Gastrocnemius medialis (tissue), 4 donors: ENCODE measurements at regions of chr14 and their contacts with region 1.

Region 1: GRCh38 chr14:64117671-64118402 is 176.3 kb downstream of the ESR2 start:
- DNase-seq: peak; percentile 84 to 90
- ATAC-seq: peak; percentile 71 to 79
- H3K4me3 ChIP-seq: no peak overlapping the region
- H3K27ac ChIP-seq: peak overlapping the region; percentile 89 to 94 (median 92)
- H3K4me1 ChIP-seq: peaks cover 34 to 61% of the 10 kb centered on the region in 2 donors
- H3K27me3 ChIP-seq: no peaks in the 10 kb centered on the region
- CTCF ChIP-seq: no peak
- POLR2A ChIP-seq: no peak

Region 2: GRCh38 chr14:64082837-64083236 is 35.0 kb before region 1 on chr14:
- in situ Hi-C with region 1: no loop called
- intact Hi-C with region 1: loop called (anchors 1 kb)
- DNase-seq: peak; percentile 25 to 60
- ATAC-seq: peak; percentile 97 to 98
- H3K4me3 ChIP-seq: no peak overlapping the region
- H3K27ac ChIP-seq: peak overlapping the region; percentile 69 to 86 (median 84)
- H3K4me1 ChIP-seq: peaks cover 15 to 22% of the 10 kb centered on the region in 2 donors
- H3K27me3 ChIP-seq: no peaks in the 10 kb centered on the region
- CTCF ChIP-seq: no peak
- POLR2A ChIP-seq: peak in 1 of 2 donors; percentile 33

Region 3: GRCh38 chr14:64095620-64096019 is 22.2 kb before region 1 on chr14:
- in situ Hi-C with region 1: no loop called
- intact Hi-C with region 1: no loop called
- DNase-seq: no peak
- ATAC-seq: no peak
- H3K4me3 ChIP-seq: no peak overlapping the region
- H3K27ac ChIP-seq: no peak overlapping the region
- H3K4me1 ChIP-seq: no peaks in the 10 kb centered on the region
- H3K27me3 ChIP-seq: no peaks in the 10 kb centered on the region
- CTCF ChIP-seq: no peak
- POLR2A ChIP-seq: no peak